CD8-positive, alpha-beta T cell (primary cell): ENCODE measurements at regions of chr6 and their contacts with region 1.

Region 1: DNA sequence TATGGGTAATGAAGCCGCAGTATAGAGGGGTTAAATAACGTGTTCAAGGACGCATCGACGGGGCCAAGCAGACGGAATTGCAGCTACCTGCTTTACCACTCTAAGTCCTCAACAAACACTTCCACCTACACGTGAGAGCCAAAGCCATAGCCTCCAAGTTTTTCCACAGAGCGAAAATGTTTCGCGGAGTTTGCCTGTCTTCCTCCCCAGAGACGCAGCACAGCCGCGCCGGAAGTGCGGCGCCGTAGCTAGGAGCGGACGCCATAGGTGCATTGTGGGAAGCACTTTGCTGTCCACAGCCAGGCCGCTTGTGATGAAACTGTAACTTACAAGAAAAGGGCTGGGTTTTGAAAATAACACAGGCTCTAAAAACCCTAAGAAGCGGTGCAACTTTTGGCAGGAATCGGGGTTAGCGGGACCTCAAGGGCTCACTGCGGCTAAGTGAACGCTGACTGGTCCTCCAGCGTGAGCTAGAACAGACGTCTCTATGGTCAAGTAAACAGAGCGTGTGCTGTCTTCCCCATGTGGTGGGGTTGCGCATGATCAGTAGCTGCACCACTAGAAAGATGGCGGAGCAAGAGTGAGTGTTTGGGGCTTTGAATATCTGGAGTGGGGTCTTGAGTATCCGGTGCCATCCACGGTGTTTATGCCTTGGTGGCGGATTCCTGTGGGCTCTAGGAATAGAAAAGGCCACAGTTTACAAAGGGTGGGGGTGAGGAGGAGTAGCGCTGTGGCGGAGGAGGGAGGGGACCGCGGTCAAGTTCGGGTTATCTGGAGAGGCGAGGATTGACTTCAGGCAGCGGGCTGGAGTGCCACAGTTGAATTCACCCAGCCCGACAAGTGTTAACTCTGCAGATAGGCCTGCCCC is at the start of gene RPL7L1:
- DNase-seq: peak; percentile 69 to 93 (median 82)
- ATAC-seq: peak; percentile 92
- H3K4me3 ChIP-seq: peak within 1 kb of the TSS; percentile 71 to 83
- H3K4me3 Mint-ChIP-seq: peak within 1 kb of the TSS; percentile 98
- H3K27ac ChIP-seq: peak within 1 kb of the TSS; percentile 92 to 94
- H3K27ac Mint-ChIP-seq: peak within 1 kb of the TSS; percentile 99
- H3K4me1 ChIP-seq: peaks cover 19% of the 10 kb centered on the region
- H3K4me1 Mint-ChIP-seq: peaks cover 27% of the 10 kb centered on the region
- H3K27me3 ChIP-seq: no peaks in the 10 kb centered on the region
- H3K27me3 Mint-ChIP-seq: no peaks in the 10 kb centered on the region
- CTCF ChIP-seq: no peak
- total RNA-seq, gene RPL7L1: 67.9 to 68.6 TPM

Region 2: GRCh38 chr6:42661540-42662153 is 218.0 kb before region 1 on chr6:
- CTCF ChIA-PET with region 1: interaction called, 109 read pairs
- POLR2A ChIA-PET with region 1: interaction called, 14 read pairs
- intact Hi-C with region 1: loop called (anchors 1 kb)
- DNase-seq: peak; percentile 75 to 93 (median 84)
- ATAC-seq: peak; percentile 99
- H3K4me3 ChIP-seq: no peak overlapping the region
- H3K4me3 Mint-ChIP-seq: no peak overlapping the region
- H3K27ac ChIP-seq: no peak overlapping the region
- H3K27ac Mint-ChIP-seq: peak overlapping the region; percentile 2
- H3K4me1 ChIP-seq: no peaks in the 10 kb centered on the region
- H3K4me1 Mint-ChIP-seq: peaks cover 2% of the 10 kb centered on the region
- H3K27me3 ChIP-seq: no peaks in the 10 kb centered on the region
- H3K27me3 Mint-ChIP-seq: no peaks in the 10 kb centered on the region
- CTCF ChIP-seq: peak; percentile 90

Region 3: GRCh38 chr6:42782622-42783176 is 96.9 kb before region 1 on chr6:
- CTCF ChIA-PET with region 1: no interaction called
- POLR2A ChIA-PET with region 1: interaction called, 43 read pairs
- intact Hi-C with region 1: loop called (anchors 1 to 5 kb)
- DNase-seq: peak; percentile 62 to 90 (median 78)
- ATAC-seq: peak; percentile 53
- H3K4me3 ChIP-seq: peak overlapping the region; percentile 74 to 98
- H3K4me3 Mint-ChIP-seq: peak overlapping the region; percentile 96
- H3K27ac ChIP-seq: peak overlapping the region; percentile 100
- H3K27ac Mint-ChIP-seq: peak overlapping the region; percentile 100
- H3K4me1 ChIP-seq: peaks cover 46% of the 10 kb centered on the region
- H3K4me1 Mint-ChIP-seq: peaks cover 26% of the 10 kb centered on the region
- H3K27me3 ChIP-seq: no peaks in the 10 kb centered on the region
- H3K27me3 Mint-ChIP-seq: no peaks in the 10 kb centered on the region
- CTCF ChIP-seq: no peak

Region 4: DNA sequence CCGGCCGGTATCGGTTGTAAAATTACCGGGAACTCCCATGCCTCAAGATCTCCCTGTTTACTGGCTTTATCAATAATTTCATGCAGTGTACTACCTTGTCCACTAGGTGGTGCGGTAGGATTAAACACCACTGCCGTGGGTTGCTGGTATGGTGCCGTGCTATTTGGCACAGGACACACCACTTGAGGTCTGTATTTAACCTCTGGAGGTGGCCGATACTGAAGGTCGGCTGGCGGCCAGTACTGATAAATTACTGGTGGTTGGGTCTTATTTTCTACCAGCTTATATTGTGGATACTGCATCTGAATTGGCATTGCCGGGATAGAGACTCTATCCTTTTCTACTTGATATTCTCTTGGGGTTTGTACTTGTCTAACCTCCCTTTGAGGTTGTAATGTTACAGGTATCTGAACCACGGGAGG is 21.9 kb after region 1 on chr6:
- CTCF ChIA-PET with region 1: interaction called, 8 read pairs
- POLR2A ChIA-PET with region 1: interaction called, 3 read pairs
- intact Hi-C with region 1: loop called in 1 of 2 experiments (anchors 1 kb)
- DNase-seq: peak; percentile 32 to 89 (median 67)
- ATAC-seq: peak; percentile 100
- H3K4me3 ChIP-seq: no peak overlapping the region
- H3K4me3 Mint-ChIP-seq: peak overlapping the region; percentile 63
- H3K27ac ChIP-seq: no peak overlapping the region
- H3K27ac Mint-ChIP-seq: no peak overlapping the region
- H3K4me1 ChIP-seq: peaks cover 6% of the 10 kb centered on the region
- H3K4me1 Mint-ChIP-seq: peaks cover 17% of the 10 kb centered on the region
- H3K27me3 ChIP-seq: no peaks in the 10 kb centered on the region
- H3K27me3 Mint-ChIP-seq: no peaks in the 10 kb centered on the region
- CTCF ChIP-seq: peak; percentile 92